ENCODE measurements at regions of chr3 and their contacts with region 1.

Region 1: DNA sequence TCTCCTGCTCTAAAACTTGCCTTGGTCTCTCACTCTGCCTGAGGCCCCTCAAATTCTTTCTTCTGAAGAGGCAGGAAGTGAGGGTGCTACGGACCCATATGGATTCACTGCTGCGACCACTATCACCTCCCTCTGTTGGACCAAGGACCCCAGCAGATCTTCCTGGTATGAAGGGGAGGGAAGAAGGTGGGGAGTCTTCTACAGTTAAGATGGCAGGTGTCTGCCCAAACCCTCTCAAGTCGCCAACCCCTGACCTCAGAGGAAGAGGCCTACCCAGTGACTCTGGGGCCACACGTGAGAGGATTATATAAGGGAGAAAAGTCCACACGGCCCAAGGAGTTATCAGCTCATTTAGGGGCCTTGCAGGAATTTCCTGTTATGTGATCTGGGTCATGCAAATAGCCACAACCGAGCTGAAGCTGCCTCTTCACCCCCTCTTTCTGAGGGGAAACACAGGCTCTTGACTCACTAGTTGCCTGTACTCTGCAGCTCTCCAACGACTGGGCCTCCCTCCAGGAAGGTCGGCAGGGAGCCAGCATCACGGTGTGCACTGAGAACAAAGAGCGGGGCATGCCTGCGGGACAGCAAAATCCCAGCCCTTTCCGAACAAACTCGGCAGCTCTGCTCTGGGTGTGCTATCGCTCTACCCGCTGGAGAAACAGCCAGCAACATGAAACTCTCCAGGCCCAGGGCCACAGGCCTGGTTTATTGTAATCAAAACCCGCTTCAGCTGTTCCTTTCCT is 116.0 kb downstream of the XXYLT1 start:
- DNase-seq: peak; percentile 89
- H3K4me3 ChIP-seq: no peak overlapping the region
- H3K27ac ChIP-seq: peak overlapping the region; percentile 82 to 90
- H3K4me1 ChIP-seq: peaks cover 22% of the 10 kb centered on the region
- H3K27me3 ChIP-seq: no peaks in the 10 kb centered on the region
- CTCF ChIP-seq: no peak
- POLR2A ChIP-seq: no peak

Region 2: DNA sequence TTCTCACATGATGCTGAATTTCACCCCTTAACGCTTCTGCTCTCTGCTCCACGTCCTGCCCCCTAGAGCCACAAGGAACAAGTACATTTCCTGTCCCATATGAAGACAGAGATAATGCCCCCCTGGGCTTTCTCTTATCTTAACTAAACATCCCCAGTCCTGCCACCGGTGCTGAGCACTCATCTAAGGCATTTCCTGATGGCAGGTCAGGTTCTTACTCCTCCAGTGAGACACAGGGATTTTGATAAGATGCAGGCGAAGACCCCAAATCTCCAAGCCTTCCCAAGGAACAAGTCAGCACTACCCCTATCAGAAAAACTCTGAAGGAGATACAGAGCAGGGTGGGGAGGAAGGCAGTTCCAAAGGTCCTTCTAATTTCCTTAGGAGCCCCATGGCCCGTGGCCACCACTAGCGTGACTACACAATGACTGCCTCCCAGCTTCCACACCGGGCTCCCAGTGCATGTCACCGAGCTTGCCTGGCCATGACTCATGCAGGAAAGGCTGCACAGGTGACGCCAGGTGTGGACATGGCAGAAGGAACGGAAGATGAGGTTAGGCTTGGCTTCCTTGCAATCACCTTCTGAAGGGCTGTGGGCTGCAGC is 36.9 kb before region 1 on chr3:
- intact Hi-C with region 1: loop called (anchors 5 kb)
- DNase-seq: no peak
- H3K4me3 ChIP-seq: no peak overlapping the region
- H3K27ac ChIP-seq: no peak overlapping the region
- H3K4me1 ChIP-seq: no peaks in the 10 kb centered on the region
- H3K27me3 ChIP-seq: no peaks in the 10 kb centered on the region
- CTCF ChIP-seq: no peak
- POLR2A ChIP-seq: no peak

Region 3: DNA sequence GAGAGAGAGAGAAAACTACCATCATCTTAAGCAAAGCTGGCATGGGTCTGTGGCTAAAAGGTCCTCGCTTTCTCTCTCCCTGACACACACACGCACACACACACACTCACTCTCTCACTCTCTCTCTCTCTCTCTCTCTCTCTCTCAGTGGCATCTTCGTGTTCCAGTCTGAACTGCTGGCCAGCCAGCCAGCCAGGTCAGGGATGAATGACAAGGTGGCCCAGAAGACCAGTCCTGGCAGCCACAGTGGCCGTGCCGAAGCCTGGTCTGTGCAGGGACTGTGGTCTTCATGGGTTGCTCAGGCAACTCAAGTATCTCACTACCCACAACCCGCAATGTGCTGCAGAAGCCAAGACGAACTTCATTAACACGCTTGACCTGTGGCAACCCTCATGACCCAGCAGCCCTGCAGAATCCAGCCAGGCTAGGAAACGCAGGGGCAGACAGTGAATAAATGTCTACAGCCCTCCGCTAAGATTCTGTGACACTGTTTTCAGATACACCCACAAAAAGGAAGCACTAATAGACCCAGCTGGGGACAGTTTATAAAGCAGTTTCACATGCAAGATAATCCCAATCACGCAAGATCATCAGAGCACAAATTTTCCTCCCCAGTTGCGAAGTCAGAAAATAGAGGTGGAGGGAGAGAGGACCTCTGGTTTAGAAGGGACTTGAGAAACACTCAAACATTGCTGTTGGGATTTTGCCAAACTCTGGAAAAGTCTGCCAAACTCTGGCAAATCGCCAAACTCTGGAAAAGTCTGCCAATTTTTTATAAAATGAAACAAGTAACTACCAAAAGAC is 49.6 kb after region 1 on chr3:
- intact Hi-C with region 1: loop called (anchors 10 kb)
- DNase-seq: no peak
- H3K4me3 ChIP-seq: no peak overlapping the region
- H3K27ac ChIP-seq: no peak overlapping the region
- H3K4me1 ChIP-seq: peaks cover 3% of the 10 kb centered on the region
- H3K27me3 ChIP-seq: no peaks in the 10 kb centered on the region
- CTCF ChIP-seq: no peak
- POLR2A ChIP-seq: no peak

Region 4: GRCh38 chr3:195475614-195476013 is 320.6 kb after region 1 on chr3:
- intact Hi-C with region 1: no loop called
- DNase-seq: no peak
- H3K4me3 ChIP-seq: no peak overlapping the region
- H3K27ac ChIP-seq: no peak overlapping the region
- H3K4me1 ChIP-seq: no peaks in the 10 kb centered on the region
- H3K27me3 ChIP-seq: no peaks in the 10 kb centered on the region
- CTCF ChIP-seq: no peak
- POLR2A ChIP-seq: no peak

Measured in prostate gland (tissue), 2 donors.